Esophagus squamous epithelium (tissue), 5 donors: ENCODE measurements at regions of chr3 and their contacts with region 1.

Region 1: DNA sequence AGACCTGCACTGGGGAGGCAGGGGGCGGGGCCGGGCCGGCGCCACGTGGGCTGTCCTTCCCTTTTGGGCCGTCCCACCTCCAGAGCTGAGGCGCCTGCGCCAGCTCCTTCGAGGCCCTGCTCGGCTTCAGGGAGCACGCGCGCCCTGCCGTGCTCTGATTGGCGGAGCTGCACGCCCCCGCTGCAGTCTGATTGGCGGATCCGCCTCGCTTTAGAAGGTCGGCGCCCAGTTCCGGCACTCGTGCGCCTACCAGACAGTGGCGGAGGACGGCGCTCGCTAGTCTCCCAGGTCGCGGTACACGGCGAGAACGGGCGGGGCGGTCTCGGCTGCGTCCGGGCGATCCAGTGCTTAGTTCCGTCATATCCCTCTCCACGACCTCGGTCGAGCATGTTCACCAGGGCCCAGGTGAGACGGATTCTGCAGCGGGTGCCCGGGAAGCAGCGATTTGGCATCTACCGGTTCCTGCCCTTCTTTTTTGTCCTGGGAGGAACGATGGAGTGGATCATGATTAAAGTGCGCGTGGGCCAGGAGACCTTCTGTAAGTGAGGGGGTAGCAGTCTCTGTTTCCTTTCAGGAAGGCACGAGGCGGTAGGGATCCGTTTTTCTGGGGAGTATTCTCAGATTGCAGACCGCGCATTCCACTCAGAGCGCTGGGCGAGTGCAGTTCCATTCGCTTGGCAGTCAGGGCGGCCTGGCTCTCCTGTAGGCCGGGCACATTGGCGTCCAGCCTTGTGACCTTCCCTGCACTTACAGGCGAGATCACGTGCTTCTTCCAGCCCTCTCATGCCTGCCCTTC is at the start of gene UQCC5:
- DNase-seq: peak; percentile 81
- H3K4me3 ChIP-seq: peak within 1 kb of the TSS; percentile 62 to 87 (median 80)
- H3K27ac ChIP-seq: peak within 1 kb of the TSS; percentile 86 to 95 (median 92)
- H3K4me1 ChIP-seq: peaks cover 56 to 77% (median 64%) of the 10 kb centered on the region in 3 donors
- H3K27me3 ChIP-seq: no peaks in the 10 kb centered on the region
- CTCF ChIP-seq: peak in 1 of 6 experiments; percentile 33
- POLR2A ChIP-seq: peak in 3 of 4 donors; percentile 98
- total RNA-seq, gene UQCC5: 0.32 to 5.1 (median 1.9) TPM

Region 2: DNA sequence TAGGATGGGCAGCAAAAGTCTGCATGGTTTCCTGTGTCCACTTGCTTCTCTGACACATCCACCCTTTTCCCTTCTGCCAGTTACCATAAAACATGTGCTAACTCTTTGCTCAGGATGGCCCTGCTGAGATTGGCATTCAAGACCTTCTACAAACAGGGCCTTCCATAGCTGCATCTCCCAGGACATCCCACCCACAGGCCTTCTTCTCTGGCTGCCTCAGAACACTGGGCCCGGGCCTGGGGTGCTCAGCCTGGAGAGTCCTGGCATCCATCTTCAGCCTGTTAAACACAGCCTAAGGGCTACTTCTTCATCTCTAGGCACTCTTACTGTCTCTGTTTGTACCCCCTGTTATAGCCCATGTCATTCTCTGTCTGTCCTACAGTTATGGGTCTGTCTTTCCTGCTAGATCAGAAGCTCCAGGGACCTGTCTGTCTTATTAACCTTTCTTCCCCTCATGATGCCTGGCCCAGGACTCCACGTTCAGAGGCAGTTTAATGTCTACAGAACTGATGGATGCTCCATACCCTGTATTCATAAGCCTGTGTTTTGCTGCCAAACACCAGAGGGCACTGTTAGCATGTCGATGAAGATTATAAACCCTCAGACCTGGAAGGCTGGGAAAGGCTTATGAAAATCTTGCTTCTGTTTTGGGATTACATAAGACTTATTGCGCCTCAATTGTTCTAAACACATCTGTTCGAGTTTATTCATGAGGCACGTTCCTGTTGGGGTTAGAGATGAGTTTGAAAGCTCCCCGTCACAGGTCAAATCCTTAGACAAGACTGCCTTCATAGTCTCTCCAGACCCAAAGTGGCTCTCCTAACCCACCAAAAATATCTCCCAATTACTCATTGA is 108.2 kb before region 1 on chr3:
- intact Hi-C with region 1: no loop called
- DNase-seq: no peak
- H3K4me3 ChIP-seq: no peak overlapping the region
- H3K27ac ChIP-seq: no peak overlapping the region
- H3K4me1 ChIP-seq: peaks cover 3 to 19% (median 4%) of the 10 kb centered on the region in 3 donors
- H3K27me3 ChIP-seq: no peaks in the 10 kb centered on the region
- CTCF ChIP-seq: peak; percentile 37 to 84 (median 72)
- POLR2A ChIP-seq: no peak

Region 3: GRCh38 chr3:52481819-52482521 is 54.6 kb before region 1 on chr3:
- intact Hi-C with region 1: loop called (anchors 5 kb)
- DNase-seq: no peak
- H3K4me3 ChIP-seq: no peak overlapping the region
- H3K27ac ChIP-seq: peak overlapping the region in 2 of 4 donors; percentile 74 to 86
- H3K4me1 ChIP-seq: peaks cover 23 to 46% (median 29%) of the 10 kb centered on the region in 3 donors
- H3K27me3 ChIP-seq: no peaks in the 10 kb centered on the region
- CTCF ChIP-seq: peak in 3 of 6 experiments; percentile 22 to 38 (median 36)
- POLR2A ChIP-seq: no peak

Region 4: DNA sequence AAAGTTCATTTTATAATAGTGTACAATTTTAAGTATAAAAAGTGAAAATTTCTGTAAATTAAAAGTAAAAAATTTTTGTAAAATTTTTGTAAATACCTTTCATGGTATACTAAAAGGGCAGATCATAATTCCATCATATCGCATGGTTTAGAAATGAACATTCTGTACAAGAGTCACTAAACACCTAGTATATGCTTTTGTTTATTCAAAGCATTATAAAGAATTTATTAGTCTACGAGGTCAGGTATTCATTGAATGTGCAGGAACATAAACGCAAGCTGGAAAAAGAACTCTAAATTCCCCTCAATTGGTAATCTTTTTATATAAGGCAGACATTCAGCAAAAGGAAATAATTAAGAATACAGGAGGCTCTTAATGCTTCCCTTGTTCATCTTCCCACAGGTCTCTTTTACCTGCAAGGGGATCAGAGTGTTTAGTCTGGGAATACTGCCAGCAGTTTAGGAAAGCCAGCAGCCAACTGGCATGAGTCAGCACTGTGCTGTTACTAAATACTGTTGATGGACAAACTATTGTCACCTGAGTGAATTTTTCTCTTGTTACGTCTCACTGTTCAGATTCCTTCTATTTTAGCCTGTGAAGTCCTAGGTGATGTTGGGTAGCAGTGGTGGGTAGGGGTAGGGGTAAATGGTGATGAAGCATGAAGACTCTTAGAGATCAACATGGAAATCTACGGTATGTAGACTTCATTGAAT is 70.0 kb after region 1 on chr3:
- intact Hi-C with region 1: no loop called
- DNase-seq: no peak
- H3K4me3 ChIP-seq: no peak overlapping the region
- H3K27ac ChIP-seq: peak overlapping the region in 2 of 4 donors; percentile 6 to 53
- H3K4me1 ChIP-seq: peaks cover 0 to 18% (median 0%) of the 10 kb centered on the region in 3 donors
- H3K27me3 ChIP-seq: no peaks in the 10 kb centered on the region
- CTCF ChIP-seq: no peak
- POLR2A ChIP-seq: no peak

Region 5: DNA sequence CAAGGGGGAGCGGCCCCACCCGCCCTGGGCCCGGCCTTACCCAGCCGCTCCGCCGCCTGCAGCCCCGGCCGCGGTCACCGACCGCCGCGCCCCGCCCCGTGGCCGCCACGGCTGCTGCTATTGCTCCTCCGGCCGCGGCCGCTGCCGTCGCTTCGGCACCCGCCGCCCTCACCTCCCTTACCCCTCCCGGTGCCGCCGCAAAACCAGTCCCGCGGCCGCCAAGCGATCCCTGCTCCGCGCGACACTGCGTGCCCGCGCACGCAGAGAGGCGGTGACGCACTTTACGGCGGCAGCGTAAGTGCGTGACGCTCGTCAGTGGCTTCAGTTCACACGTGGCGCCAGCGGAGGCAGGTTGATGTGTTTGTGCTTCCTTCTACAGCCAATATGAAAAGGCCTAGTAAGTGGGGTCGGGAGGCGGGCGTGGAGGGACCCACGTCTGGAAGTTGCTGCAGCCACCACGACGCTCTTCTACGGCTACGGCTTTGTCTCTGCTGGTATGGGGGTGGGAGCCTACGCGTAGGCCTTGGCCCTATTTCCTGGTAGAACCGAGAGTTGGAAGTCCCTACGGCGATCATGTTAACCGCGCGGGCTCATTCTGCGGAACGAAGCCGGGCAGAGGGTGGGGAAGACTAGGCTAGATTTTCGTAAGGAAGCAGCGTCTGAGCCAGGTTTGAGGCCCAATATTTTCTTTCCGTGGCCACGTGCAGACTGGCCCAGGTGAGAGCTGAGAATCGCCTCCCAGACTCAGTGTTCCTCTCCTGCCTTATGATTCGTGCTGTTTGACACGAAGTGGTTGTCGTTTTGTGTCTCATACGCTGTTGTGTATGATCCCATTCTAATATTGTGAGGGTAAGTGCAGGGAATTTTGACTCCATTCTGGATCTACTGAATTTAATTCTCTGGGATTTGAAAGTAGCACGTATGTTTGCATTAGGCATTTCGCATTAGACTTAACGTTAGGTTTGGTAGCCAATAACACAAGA is 149.4 kb after region 1 on chr3 and contains the starts of genes GNL3 and PBRM1:
- intact Hi-C with region 1: loop called (anchors 10 kb)
- DNase-seq: peak; percentile 68
- H3K4me3 ChIP-seq: peak within 1 kb of the TSS; percentile 49 to 90 (median 72)
- H3K27ac ChIP-seq: peak within 1 kb of the TSS; percentile 91 to 100 (median 97)
- H3K4me1 ChIP-seq: peaks cover 11 to 79% (median 40%) of the 10 kb centered on the region in 3 donors
- H3K27me3 ChIP-seq: no peaks in the 10 kb centered on the region
- CTCF ChIP-seq: peak in 2 of 6 experiments; percentile 2 to 15
- POLR2A ChIP-seq: peak in 3 of 4 donors; percentile 63 to 85 (median 82)
- total RNA-seq, gene GNL3: 95.8 to 184 (median 112) TPM
- total RNA-seq, gene PBRM1: 34.0 to 76.4 (median 63.7) TPM